ENCODE measurements at regions of chr15 and their contacts with region 1.

Region 1: DNA sequence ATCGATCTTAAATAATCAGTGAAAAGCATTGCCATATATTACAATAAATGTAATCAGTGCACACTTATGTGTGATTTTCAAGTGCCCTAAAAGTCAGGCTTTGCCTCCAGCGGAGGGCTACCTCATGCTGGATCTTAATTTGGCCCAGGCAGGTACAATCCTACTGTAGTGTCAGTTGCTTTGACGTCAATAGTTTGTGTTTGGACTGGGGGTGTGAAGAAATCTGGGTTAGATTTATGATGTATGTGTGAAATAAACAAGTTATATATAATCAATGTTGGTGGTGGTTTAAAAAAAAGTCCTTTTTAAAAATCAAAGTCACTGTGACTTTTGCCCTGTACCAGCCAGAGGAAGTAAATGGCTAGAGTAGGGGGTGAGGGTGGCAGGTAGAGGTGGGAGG is 14.0 kb upstream of the RASGRP1 start:
- DNase-seq: no peak
- H3K4me3 ChIP-seq: no peak overlapping the region
- H3K27ac ChIP-seq: no peak overlapping the region
- H3K4me1 ChIP-seq: no peaks in the 10 kb centered on the region
- H3K27me3 ChIP-seq: no peaks in the 10 kb centered on the region
- CTCF ChIP-seq: no peak

Region 2: GRCh38 chr15:38453971-38454695 is 124.5 kb before region 1 on chr15 and contains the start of gene FAM98B:
- CTCF ChIA-PET with region 1: no interaction called
- POLR2A ChIA-PET with region 1: no interaction called
- intact Hi-C with region 1: no loop called
- DNase-seq: peak; percentile 70 to 91
- H3K4me3 ChIP-seq: peak within 1 kb of the TSS; percentile 67
- H3K27ac ChIP-seq: peak within 1 kb of the TSS; percentile 71
- H3K4me1 ChIP-seq: peaks cover 16% of the 10 kb centered on the region
- H3K27me3 ChIP-seq: no peaks in the 10 kb centered on the region
- CTCF ChIP-seq: no peak
- total RNA-seq, gene FAM98B: 14.6 and 34.7 TPM in 2 replicates

Region 3: DNA sequence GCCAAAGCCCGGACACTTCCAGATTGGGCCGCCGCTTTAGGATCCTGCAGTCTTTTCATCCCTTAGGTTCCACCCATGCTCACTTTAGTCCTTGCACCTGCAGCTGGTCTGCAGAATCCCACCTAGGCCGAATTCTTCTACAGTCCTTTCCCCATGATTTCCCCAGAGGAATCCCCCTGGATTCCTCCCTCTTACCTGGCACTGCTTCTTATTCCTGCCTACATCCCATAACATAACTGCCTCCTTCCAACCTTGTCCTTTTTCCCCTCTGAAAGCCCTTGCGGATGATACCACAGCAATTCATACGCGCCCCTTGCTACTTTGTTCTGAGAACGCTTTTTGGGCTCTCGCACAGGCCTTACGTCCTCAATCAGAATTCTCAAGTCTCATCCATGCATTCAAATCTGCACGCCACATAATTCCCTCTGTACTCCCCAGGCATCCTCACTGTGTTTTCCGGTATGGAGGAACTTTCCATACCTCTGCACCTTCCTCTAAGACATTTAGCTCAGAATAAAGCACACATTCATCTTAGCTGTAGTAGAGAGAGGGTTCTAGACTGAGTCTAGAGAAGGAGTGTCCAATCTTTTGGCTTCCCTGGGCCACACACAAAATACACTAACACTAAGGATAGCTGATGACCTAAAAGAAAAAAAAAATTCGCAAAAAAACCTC is 1355.9 kb after region 1 on chr15:
- CTCF ChIA-PET with region 1: no interaction called
- POLR2A ChIA-PET with region 1: interaction called, 31 read pairs
- intact Hi-C with region 1: no loop called
- DNase-seq: peak in 1 of 2 experiments; percentile 8
- H3K4me3 ChIP-seq: peak overlapping the region; percentile 93
- H3K27ac ChIP-seq: peak overlapping the region; percentile 88
- H3K4me1 ChIP-seq: peaks cover 23% of the 10 kb centered on the region
- H3K27me3 ChIP-seq: no peaks in the 10 kb centered on the region
- CTCF ChIP-seq: no peak